K562 (cell line): ENCODE measurements at regions of chr5 and their contacts with region 1.

Region 1: DNA sequence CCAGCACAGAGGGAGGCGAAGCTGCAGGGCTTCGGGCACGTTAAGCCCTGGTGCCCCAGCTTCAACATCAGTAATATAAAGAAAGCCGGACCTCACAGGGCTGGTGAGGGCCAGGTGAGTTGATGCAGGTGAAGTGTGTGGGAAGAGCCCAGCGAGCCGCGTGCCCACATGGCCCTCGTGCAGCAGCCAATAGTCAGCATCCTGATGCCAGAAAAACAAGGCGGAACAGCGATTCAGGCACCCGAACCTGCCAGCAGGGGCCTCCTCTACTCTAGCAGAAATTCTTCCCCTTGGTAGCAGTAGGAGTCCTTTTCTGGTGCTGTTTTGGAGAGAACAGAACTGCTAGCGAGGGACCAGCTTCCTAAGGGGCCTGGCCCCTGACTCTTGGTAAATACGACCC is 7.8 kb downstream of the MED10 start:
- DNase-seq: no peak
- ATAC-seq: peak; percentile 30; the same call in 2 of the 3 replicates
- H3K4me3 ChIP-seq: no peak overlapping the region
- H3K27ac ChIP-seq: no peak overlapping the region
- H3K4me1 ChIP-seq: no peaks in the 10 kb centered on the region
- H3K27me3 ChIP-seq: no peaks in the 10 kb centered on the region
- CTCF ChIP-seq: peak; percentile 4 to 22 (median 20); a peak in 1 of 6 replicates
- EP300 ChIP-seq: no peak
- POLR2A ChIP-seq: no peak
- RAD21 ChIP-seq: peak in 1 of 2 experiments; percentile 6; a peak in 1 of 4 replicates

Region 2: DNA sequence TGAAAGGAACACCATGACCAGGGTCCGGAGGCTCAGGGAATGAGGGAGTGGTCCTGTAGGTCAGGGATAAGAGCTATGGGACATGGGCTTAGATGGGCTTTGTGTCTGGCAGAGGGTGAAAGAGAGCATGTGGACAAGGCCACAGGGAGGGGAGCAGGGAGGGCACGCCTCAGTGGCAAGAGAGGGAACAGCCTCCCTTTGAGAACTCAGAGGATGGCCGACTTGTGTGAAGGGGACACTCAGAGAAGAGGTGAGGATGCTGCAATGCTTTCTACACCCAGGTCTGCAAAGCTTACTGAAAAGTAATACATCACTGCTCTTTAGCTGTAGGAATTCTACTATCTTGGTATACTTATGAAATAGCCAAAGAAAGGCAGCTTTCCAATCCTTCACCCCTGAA is 15.7 kb before region 1 on chr5:
- CTCF ChIA-PET with region 1: no interaction called
- POLR2A ChIA-PET with region 1: interaction called, 18 read pairs
- in situ Hi-C with region 1: no loop called
- intact Hi-C with region 1: no loop called
- DNase-seq: no peak
- ATAC-seq: peak; percentile 40; the same call in 2 of the 3 replicates
- H3K4me3 ChIP-seq: no peak overlapping the region
- H3K27ac ChIP-seq: no peak overlapping the region
- H3K4me1 ChIP-seq: no peaks in the 10 kb centered on the region
- H3K27me3 ChIP-seq: peaks cover 61 to 85% of the 10 kb centered on the region in 2 experiments
- CTCF ChIP-seq: no peak
- EP300 ChIP-seq: no peak
- POLR2A ChIP-seq: no peak
- RAD21 ChIP-seq: no peak

Region 3: DNA sequence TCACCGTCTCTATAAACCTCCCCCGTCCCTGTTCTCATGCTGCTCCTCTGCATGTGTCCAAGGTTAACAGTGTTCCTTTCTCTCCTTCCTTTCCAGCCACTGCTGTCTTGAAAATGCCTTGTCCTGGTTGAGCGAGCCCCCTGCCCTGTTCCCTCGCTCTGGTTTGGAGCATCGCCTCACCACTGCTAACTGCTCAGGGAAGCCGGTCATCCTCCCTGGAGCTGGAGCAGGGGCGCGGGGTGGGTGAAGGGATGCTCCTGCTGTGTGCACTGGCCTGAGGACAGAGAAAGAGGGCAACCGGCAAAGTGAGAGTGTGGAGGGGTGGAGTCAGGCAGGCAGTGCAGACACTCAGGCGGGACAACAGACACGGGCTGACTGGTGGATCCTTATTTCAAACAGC is 97.5 kb after region 1 on chr5:
- CTCF ChIA-PET with region 1: no interaction called
- POLR2A ChIA-PET with region 1: no interaction called
- in situ Hi-C with region 1: no loop called
- intact Hi-C with region 1: no loop called
- DNase-seq: no peak
- ATAC-seq: no peak
- H3K4me3 ChIP-seq: no peak overlapping the region
- H3K27ac ChIP-seq: no peak overlapping the region
- H3K4me1 ChIP-seq: no peaks in the 10 kb centered on the region
- H3K27me3 ChIP-seq: peaks cover 38 to 67% of the 10 kb centered on the region in 2 experiments
- CTCF ChIP-seq: no peak
- EP300 ChIP-seq: no peak
- POLR2A ChIP-seq: no peak
- RAD21 ChIP-seq: no peak